Testis (tissue), 5 donors: ENCODE measurements at regions of chr17 and their contacts with region 1.

Region 1: DNA sequence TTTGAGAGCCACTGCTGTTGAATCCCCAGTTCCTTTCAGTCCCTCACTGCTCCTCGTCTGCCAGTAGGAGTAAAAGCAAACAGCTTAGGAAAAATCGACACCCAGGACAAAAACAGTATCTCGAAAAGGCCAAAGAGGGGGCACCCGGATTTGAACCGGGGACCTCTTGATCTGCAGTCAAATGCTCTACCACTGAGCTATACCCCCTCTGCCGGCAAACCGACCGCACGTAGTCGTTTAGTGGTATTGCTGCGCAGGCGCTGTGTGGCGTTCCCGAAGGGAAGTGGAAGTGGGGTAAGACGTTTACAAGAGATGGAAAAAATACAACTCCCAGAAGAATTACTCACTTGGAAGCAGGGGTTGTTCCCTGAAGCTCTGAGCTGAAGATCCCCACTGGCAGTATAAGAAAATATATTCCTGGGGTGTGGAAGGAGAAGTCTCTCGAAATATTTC is 2.2 kb upstream of the PLXDC1 start:
- DNase-seq: peak; percentile 93
- H3K4me3 ChIP-seq: peak overlapping the region; percentile 72 to 89
- H3K27ac ChIP-seq: peak overlapping the region; percentile 93 to 96
- H3K4me1 ChIP-seq: peaks cover 13% of the 10 kb centered on the region
- H3K27me3 ChIP-seq: no peaks in the 10 kb centered on the region
- CTCF ChIP-seq: peak in 2 of 3 experiments; percentile 50 to 63
- POLR2A ChIP-seq: no peak

Region 2: DNA sequence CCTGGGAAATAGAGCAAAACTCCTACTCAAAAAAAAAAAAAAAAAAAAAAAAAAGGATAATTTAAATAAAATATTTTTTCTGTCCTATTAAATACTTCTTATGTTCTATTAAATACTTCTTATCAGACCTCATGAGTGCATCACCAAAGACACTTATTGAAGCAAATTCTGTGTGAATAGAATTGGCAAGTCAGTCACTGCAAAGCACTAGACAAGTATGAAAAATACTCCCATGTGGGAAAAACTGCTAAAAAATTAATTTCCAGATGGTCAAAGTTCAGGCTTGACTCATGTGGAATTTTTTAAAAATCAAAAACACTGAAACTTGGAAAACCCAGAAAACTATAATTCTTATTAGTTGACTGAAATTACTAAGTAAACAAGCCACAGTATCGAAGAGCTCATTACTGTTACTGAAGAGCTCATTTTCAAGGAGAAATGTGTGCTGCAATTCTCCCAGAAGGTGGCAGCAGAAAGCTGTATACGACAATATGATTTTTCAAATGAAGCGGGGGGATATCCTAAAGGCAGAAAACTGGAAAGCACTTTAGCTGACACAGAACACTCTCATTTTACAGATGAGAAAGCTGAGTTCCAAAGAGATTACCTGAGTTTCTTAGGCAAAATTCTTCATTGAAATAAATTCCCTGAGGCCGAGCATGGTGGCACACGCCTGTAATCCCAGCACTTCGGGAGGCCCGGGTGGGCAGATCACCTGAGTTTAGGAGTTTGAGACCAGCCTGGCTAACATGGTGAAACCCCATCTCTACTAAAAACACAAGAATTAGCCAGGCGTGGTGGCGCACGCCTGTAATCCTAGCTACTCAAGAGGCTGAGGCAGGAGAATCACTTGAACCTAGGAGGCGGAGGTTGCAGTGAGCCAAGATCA is 170.5 kb before region 1 on chr17:
- intact Hi-C with region 1: loop called (anchors 5 kb)
- DNase-seq: peak; percentile 70
- H3K4me3 ChIP-seq: no peak overlapping the region
- H3K27ac ChIP-seq: no peak overlapping the region
- H3K4me1 ChIP-seq: no peaks in the 10 kb centered on the region
- H3K27me3 ChIP-seq: no peaks in the 10 kb centered on the region
- CTCF ChIP-seq: peak; percentile 59 to 69 (median 68)
- POLR2A ChIP-seq: no peak

Region 3: DNA sequence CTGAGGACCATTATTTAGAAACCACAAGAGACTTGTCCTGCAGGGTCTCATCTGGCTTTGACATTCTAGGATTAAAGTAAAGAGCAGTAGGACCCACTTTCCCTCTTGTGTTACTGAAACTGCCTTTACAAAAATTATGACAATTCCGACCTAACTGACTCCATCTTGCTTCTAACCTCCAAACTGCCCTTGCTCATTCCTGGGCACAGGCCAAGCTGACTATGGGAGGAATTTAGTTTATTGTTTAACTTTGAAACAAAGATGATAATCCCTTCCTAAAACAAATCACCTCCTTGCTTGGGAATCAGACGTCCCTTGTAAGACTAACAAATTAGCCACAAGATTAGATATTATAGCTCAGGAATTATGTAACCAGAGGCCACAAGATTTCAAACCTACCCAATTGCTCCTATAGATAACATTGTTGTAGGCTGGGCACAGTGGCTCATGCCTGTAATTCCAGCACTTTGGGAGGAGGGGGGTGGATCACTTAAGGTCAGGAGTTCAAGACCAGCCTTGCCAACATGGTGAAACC is 99.4 kb before region 1 on chr17:
- intact Hi-C with region 1: no loop called
- DNase-seq: peak; percentile 64
- H3K4me3 ChIP-seq: no peak overlapping the region
- H3K27ac ChIP-seq: no peak overlapping the region
- H3K4me1 ChIP-seq: peaks cover 6% of the 10 kb centered on the region
- H3K27me3 ChIP-seq: no peaks in the 10 kb centered on the region
- CTCF ChIP-seq: no peak
- POLR2A ChIP-seq: no peak

Region 4: GRCh38 chr17:39069114-39069756 is 84.4 kb before region 1 on chr17:
- intact Hi-C with region 1: loop called (anchors 10 kb)
- DNase-seq: peak; percentile 37
- H3K4me3 ChIP-seq: no peak overlapping the region
- H3K27ac ChIP-seq: no peak overlapping the region
- H3K4me1 ChIP-seq: peaks cover 4% of the 10 kb centered on the region
- H3K27me3 ChIP-seq: no peaks in the 10 kb centered on the region
- CTCF ChIP-seq: peak; percentile 38 to 59 (median 38)
- POLR2A ChIP-seq: no peak

Region 5: DNA sequence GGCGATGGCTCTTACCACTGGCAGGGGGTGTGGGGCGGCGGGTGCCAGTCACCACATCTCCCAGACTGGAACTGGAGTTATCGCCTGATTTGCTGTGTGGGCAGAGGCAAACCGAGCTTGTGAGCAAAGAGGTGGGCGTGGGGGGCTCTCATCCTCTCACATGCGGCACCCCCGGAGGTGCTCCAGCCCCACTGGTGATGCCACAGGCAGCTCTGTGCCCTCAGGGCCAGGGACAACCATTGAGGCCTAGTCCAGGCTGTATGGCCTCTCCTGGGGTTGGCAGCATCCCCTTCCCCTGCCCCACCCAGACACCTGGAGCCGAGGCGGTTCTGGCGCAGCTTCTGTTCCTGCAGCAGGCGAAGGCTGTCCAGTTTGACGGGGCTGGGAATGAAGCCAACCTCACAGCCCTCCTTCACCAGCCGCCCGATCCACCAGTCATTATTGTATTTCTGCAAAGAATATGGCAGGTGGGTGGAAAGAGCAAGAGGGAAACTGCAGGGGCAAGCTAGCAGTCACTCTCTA is 32.9 kb after region 1 on chr17:
- intact Hi-C with region 1: no loop called
- DNase-seq: no peak
- H3K4me3 ChIP-seq: no peak overlapping the region
- H3K27ac ChIP-seq: no peak overlapping the region
- H3K4me1 ChIP-seq: no peaks in the 10 kb centered on the region
- H3K27me3 ChIP-seq: no peaks in the 10 kb centered on the region
- CTCF ChIP-seq: no peak
- POLR2A ChIP-seq: no peak